Dorsolateral prefrontal cortex (tissue), 120 donors: ENCODE measurements at regions of chr17 and their contacts with region 1.

Region 1: GRCh38 chr17:59004338-59005111 is 102.2 kb downstream of the TRIM37 start:
- DNase-seq: peak in 7 of 10 donors; percentile 34 to 77 (median 55)
- H3K4me3 ChIP-seq: no peak overlapping the region
- H3K27ac ChIP-seq: peak overlapping the region in 7 of 59 donors; percentile 1 to 48 (median 37)
- H3K27me3 ChIP-seq: no peaks in the 10 kb centered on the region
- CTCF ChIP-seq: peak; percentile 91 to 99 (median 97)

Region 2: DNA sequence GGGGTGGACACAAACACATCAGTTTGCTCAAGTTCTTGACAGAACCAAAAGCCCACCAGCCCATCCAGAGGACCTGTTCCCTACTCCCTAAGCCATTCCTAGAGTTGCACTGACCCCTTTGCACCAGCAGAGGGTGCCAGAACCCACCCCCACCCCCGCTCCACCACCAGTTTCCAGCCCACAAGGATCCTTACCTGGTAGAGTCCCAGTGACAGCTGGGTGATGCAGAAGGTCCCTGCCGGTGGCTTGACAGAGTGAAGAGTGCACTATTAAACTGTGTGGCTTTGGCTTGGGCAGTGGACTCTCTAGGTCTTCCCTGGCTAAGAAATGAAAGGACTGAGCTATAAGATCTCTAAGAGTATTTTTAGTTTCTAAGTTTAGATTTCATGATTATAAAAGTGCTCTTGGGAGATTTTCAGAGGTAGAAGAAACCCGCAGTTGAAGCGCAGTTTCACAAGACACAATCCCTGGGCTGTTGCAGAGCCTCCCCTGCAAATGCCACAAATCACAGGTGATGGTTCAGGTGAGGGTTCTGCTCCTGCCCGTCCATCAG is 416.7 kb before region 1 on chr17:
- intact Hi-C with region 1: loop called in 1 of 2 experiments (anchors 10 kb)
- DNase-seq: peak in 9 of 10 donors; percentile 21 to 62 (median 45)
- H3K4me3 ChIP-seq: peak overlapping the region in 1 of 59 donors; percentile 17
- H3K27ac ChIP-seq: peak overlapping the region in 32 of 59 donors; percentile 6 to 79 (median 52)
- H3K27me3 ChIP-seq: no peaks in the 10 kb centered on the region
- CTCF ChIP-seq: peak; percentile 63 to 96 (median 88)

Region 3: GRCh38 chr17:58710936-58711775 is 293.4 kb before region 1 on chr17:
- intact Hi-C with region 1: loop called in 1 of 2 experiments (anchors 2 kb)
- DNase-seq: peak in 2 of 10 donors; percentile 28 to 32
- H3K4me3 ChIP-seq: no peak overlapping the region
- H3K27ac ChIP-seq: no peak overlapping the region
- H3K27me3 ChIP-seq: no peaks in the 10 kb centered on the region
- CTCF ChIP-seq: peak; percentile 63 to 88 (median 78)

Region 4: GRCh38 chr17:58728786-58729185 is 275.7 kb before region 1 on chr17:
- intact Hi-C with region 1: loop called in 1 of 2 experiments (anchors 10 kb)
- DNase-seq: no peak
- H3K4me3 ChIP-seq: no peak overlapping the region
- H3K27ac ChIP-seq: peak overlapping the region in 3 of 59 donors; percentile 9 to 22 (median 11)
- H3K27me3 ChIP-seq: no peaks in the 10 kb centered on the region
- CTCF ChIP-seq: no peak

Region 5: DNA sequence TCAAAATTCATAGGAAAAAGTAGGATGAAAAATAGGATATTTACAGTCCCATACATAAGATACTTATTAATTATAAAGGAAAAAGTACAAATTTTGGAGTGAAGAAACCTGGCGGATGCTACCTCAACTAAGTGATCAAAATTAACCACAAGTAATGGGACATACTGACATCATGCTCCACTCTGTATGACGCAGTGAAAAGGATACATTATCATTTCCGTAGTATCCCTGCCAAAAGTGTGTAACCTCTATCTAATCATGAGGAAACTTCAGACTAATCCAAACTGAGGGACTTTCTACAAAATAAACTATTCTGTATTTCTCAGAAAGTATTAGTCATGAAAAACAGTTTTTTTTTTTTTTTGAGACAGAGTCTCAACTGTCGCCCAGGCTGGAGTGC is 41.7 kb after region 1 on chr17:
- intact Hi-C with region 1: no loop called
- DNase-seq: no peak
- H3K4me3 ChIP-seq: no peak overlapping the region
- H3K27ac ChIP-seq: no peak overlapping the region
- H3K27me3 ChIP-seq: no peaks in the 10 kb centered on the region
- CTCF ChIP-seq: no peak